ENCODE measurements at regions of chr15 and their contacts with region 1.

Region 1: DNA sequence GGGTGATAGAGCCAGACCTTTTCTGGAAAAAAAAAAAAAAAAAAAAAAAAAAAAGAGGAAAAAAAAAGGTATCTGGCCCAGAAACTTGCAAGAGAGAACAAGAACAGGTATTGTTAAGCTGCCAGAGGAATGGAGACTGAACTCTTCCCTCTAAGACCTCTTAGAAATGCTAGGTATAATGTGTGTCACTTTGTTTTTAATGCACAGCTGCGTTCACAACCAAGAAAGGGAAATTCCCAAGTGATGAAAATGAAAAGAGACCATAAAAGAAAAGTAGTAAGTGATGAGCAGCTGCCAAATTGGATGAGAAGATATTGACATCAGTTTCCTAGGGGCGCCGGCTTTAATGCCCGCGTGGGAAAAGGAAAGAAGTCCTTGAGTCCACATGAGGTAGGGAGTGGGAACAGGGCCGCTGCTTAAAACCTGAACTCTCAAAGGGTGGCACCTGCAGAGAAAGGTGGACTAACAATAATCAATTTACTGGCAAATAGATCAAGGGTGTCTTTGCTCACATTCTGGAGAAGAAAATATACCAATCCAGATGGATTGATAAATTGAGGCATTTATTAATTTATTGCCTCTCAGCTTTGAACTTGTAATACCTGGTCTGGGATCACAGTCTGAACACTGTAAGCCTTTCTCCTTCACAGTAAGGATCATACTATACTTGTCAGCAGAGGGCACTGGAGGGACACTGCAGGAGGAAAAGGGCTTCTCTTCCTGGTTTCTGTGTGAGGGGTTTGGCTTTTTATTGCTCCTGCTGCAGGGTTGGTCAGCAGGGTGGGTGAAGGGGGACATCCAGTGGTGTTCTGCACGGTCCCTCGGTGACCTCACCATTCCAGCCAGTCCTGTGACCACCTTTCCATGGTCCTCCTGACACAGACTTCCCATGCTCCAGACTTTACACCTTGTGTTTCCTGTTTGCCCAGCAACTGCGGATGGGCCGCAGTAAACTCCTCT is 131.6 kb downstream of the AQP9 start:
- DNase-seq: no peak
- ATAC-seq: peak; percentile 92

Region 2: GRCh38 chr15:58331903-58332675 is 62.4 kb after region 1 on chr15:
- intact Hi-C with region 1: loop called (anchors 2 kb)
- DNase-seq: peak; percentile 94
- ATAC-seq: peak; percentile 98

Region 3: GRCh38 chr15:58378254-58379085 is 108.7 kb after region 1 on chr15:
- intact Hi-C with region 1: no loop called
- DNase-seq: no peak
- ATAC-seq: no peak

Region 4: DNA sequence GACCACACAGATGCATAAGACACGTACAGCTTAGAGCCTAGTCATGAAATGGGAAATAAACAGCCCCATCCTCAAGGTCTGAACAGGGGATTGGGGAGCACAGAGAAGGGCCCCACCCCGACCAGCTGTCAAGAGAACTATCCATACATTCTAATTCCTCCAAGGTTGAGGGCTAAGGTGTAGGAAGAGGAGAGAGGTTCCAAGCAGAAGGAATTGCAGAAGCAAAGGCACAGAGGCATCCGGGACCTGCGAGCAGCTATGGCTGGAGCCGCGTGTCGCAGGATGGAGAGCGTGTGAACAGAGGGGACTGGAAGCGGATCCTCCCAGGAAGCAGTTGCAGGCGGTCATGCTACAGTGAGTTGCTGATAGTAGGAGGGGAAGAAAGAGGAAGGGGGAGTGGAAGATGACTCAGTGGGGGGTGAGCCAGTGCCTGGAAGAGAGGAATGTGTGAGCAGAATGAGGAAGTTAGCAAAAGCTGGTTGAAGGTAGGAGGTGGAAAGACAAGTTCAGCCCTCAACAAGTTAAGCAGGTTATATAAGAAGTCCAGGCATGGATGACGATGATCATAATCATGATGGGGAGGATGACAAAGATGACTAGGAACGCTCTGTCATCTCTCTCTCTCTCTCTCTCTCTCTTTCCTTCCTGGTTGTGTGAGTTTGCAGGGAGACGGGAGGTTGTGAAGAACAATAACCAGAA is 251.7 kb after region 1 on chr15:
- intact Hi-C with region 1: loop called (anchors 10 kb)
- DNase-seq: peak; percentile 70
- ATAC-seq: peak; percentile 25

Region 5: DNA sequence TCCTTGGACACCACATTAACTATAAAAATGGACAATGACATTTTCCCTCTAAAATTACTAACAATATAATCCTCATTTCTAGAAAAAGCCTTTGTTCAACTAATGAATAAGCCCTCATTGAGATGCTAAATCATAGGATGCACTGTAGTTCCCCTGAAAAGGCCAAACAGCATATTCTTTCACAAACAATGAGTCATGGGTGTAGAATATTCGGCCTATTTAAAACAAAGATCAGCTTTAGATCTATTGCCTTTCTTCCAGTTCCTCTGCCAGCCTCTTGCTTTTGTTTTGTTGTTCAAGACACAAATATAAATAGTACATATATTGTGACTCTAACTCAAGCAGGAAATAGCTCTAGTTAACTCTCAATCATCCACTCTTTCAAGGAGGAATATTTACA is 397.2 kb after region 1 on chr15:
- intact Hi-C with region 1: loop called (anchors 10 kb)
- DNase-seq: no peak
- ATAC-seq: no peak

Region 6: DNA sequence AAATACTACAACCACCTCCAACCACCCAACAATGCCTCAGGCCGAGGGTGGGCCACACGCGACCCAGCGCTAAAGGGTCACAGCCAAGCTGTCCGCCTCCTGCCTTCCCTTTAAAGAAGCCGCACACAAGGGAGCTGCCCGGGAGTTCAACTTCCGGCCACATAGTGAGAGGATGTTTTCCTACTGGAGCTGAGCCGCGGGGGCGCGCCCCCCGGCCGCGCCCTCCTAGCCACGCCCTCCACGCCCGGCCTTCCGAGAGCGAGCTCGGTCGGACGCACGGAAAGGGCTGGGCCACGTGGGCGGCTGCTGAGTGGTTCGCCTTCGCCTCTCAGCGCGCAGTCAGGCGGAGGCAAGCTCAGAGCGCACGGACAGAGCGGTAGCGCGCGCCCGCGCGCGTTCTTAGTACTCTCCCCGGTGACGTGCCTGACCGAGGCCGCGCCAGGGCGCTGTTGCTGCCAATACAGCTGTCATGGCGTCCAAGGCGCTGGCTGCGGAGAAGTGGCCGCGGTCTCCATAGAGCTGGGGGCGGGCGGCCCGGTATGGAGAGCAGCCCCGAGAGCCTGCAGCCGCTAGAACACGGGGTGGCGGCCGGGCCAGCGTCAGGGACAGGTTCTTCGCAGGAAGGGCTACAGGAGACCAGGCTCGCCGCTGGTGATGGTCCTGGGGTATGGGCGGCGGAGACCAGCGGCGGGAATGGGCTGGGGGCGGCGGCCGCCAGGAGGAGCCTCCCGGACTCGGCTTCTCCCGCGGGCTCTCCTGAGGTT is 501.3 kb after region 1 on chr15 and contains the start of gene MINDY2:
- intact Hi-C with region 1: loop called (anchors 5 kb)
- DNase-seq: peak; percentile 100
- ATAC-seq: peak; percentile 99
- total RNA-seq, gene MINDY2: 38.2 TPM

Measured in Right ventricle myocardium inferior (tissue), 1 donor.